PC-3 (cell line): ENCODE measurements at regions of chr1 and their contacts with region 1.

Region 1: GRCh38 chr1:85307987-85308832 is 31.8 kb upstream of the BCL10 start:
- DNase-seq: peak; percentile 93
- ATAC-seq: peak; percentile 98
- H3K4me3 ChIP-seq: peak overlapping the region; percentile 11; the same call in 1 of the 2 replicates
- H3K27ac ChIP-seq: peak overlapping the region; percentile 23
- H3K4me1 ChIP-seq: peaks cover 18% of the 10 kb centered on the region
- H3K27me3 ChIP-seq: no peaks in the 10 kb centered on the region
- CTCF ChIP-seq: peak; percentile 99

Region 2: DNA sequence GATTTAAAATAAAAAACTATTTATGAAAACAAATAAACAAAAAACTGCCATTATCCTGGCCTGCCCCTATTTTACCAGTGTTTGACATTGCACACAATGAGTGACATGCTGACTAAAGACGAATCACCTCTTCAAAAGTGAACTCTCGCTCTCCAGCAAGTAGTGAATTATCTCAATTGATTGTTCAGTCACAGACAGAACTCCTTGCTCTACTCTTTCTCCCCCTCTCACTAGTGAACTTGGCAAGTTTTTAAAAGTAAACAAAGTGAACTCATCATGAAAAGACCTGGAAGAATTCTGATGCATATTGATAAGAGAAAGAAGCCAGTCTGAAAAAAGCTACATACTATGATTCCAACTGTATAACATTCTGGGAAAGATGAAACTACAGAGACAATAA is 44.1 kb before region 1 on chr1:
- CTCF ChIA-PET with region 1: no interaction called
- POLR2A ChIA-PET with region 1: no interaction called
- intact Hi-C with region 1: no loop called
- DNase-seq: peak; percentile 71
- ATAC-seq: peak; percentile 19
- H3K4me3 ChIP-seq: no peak overlapping the region
- H3K27ac ChIP-seq: peak overlapping the region; percentile 43
- H3K4me1 ChIP-seq: peaks cover 16% of the 10 kb centered on the region
- H3K27me3 ChIP-seq: no peaks in the 10 kb centered on the region
- CTCF ChIP-seq: no peak

Region 3: DNA sequence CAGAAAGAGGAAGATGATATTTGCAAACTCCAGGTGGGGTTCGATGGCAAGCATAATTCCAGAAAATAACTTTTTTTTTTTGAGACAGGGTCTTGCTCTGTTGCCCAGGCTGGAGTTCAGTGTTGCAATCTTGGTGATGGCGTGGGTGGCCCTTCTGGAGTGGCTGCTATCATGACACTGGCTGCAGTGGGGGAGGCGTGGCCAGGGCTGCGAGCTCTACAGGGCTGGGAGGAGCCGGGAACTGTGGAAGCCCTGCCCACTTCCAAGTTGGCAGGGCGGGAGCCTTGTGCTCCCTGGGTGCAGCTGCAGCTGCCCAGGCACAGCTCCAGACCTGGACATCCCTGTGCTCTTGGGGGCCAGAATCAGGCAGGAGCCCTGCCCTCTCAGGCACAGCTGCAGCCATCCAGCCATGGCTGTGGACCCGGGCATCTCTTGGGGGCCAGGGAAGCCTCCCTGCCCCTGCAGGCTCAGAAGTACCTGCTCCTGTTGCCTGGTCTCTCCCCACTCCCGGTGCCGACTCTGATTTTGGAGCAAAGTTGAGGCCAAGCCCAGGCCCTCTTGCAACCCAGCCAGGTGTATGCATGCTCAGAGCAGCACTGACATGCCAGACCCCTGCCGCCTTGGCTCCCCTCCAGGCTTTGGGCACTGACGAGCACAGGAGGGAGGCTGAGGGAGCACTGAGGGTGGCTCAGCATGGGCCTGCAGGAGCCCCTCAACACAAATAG is 24.6 kb before region 1 on chr1:
- CTCF ChIA-PET with region 1: no interaction called
- POLR2A ChIA-PET with region 1: no interaction called
- intact Hi-C with region 1: no loop called
- DNase-seq: no peak
- ATAC-seq: no peak
- H3K4me3 ChIP-seq: no peak overlapping the region
- H3K27ac ChIP-seq: no peak overlapping the region
- H3K4me1 ChIP-seq: peaks cover 21% of the 10 kb centered on the region
- H3K27me3 ChIP-seq: no peaks in the 10 kb centered on the region
- CTCF ChIP-seq: no peak

Region 4: GRCh38 chr1:85330711-85331290 is 22.6 kb after region 1 on chr1:
- CTCF ChIA-PET with region 1: no interaction called
- POLR2A ChIA-PET with region 1: no interaction called
- intact Hi-C with region 1: no loop called
- DNase-seq: no peak
- ATAC-seq: no peak
- H3K4me3 ChIP-seq: no peak overlapping the region
- H3K27ac ChIP-seq: peak overlapping the region; percentile 90
- H3K4me1 ChIP-seq: peaks cover 53% of the 10 kb centered on the region
- H3K27me3 ChIP-seq: no peaks in the 10 kb centered on the region
- CTCF ChIP-seq: no peak

Region 5: DNA sequence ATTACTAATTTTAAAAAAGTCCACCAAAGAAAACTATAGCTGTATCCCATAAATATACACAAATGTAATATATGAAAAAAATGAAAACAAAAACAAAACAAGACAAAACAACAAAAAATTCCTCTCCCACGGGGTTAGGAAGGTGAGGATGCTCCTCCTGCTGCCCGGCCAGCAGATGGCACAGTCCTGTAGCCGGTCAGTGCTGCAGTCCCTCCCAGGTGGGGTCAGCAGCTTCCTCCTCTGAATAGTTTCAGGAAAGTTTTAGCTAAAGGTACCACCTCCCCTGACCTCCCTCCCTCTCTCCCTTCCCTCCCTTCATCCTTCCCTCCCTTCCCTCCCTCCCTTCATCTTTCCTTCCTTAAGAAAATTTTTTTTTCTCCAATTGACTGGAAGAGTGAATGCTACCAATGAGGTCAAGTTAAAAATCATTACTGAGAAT is 36.1 kb after region 1 on chr1:
- CTCF ChIA-PET with region 1: interaction called, 8 read pairs
- POLR2A ChIA-PET with region 1: no interaction called
- intact Hi-C with region 1: loop called (anchors 1 kb)
- DNase-seq: peak; percentile 63
- ATAC-seq: peak; percentile 78
- H3K4me3 ChIP-seq: no peak overlapping the region
- H3K27ac ChIP-seq: peak overlapping the region; percentile 71
- H3K4me1 ChIP-seq: peaks cover 57% of the 10 kb centered on the region
- H3K27me3 ChIP-seq: no peaks in the 10 kb centered on the region
- CTCF ChIP-seq: peak; percentile 85

Region 6: GRCh38 chr1:85398391-85399064 is 90.3 kb after region 1 on chr1:
- CTCF ChIA-PET with region 1: no interaction called
- POLR2A ChIA-PET with region 1: no interaction called
- intact Hi-C with region 1: loop called (anchors 1 kb)
- DNase-seq: peak; percentile 72
- ATAC-seq: peak; percentile 81
- H3K4me3 ChIP-seq: no peak overlapping the region
- H3K27ac ChIP-seq: no peak overlapping the region
- H3K4me1 ChIP-seq: peaks cover 18% of the 10 kb centered on the region; the same call in 1 of the 2 replicates
- H3K27me3 ChIP-seq: no peaks in the 10 kb centered on the region
- CTCF ChIP-seq: peak; percentile 77

Region 7: GRCh38 chr1:85450832-85451231 is 142.6 kb after region 1 on chr1:
- CTCF ChIA-PET with region 1: no interaction called
- POLR2A ChIA-PET with region 1: no interaction called
- intact Hi-C with region 1: no loop called
- DNase-seq: peak; percentile 71
- ATAC-seq: peak; percentile 54
- H3K4me3 ChIP-seq: no peak overlapping the region
- H3K27ac ChIP-seq: no peak overlapping the region
- H3K4me1 ChIP-seq: peaks cover 30% of the 10 kb centered on the region
- H3K27me3 ChIP-seq: no peaks in the 10 kb centered on the region
- CTCF ChIP-seq: no peak

Region 8: GRCh38 chr1:85464497-85465098 is 156.4 kb after region 1 on chr1:
- CTCF ChIA-PET with region 1: interaction called, 3 read pairs
- POLR2A ChIA-PET with region 1: no interaction called
- intact Hi-C with region 1: loop called (anchors 5 kb)
- DNase-seq: peak; percentile 73
- ATAC-seq: peak; percentile 69
- H3K4me3 ChIP-seq: peak overlapping the region; percentile 94
- H3K27ac ChIP-seq: no peak overlapping the region
- H3K4me1 ChIP-seq: peaks cover 48% of the 10 kb centered on the region
- H3K27me3 ChIP-seq: no peaks in the 10 kb centered on the region
- CTCF ChIP-seq: no peak

Region 9: GRCh38 chr1:85502625-85503083 is 194.4 kb after region 1 on chr1:
- CTCF ChIA-PET with region 1: no interaction called
- POLR2A ChIA-PET with region 1: no interaction called
- intact Hi-C with region 1: loop called (anchors 2 kb)
- DNase-seq: peak; percentile 79
- ATAC-seq: peak; percentile 87
- H3K4me3 ChIP-seq: no peak overlapping the region
- H3K27ac ChIP-seq: no peak overlapping the region
- H3K4me1 ChIP-seq: peaks cover 11% of the 10 kb centered on the region
- H3K27me3 ChIP-seq: no peaks in the 10 kb centered on the region
- CTCF ChIP-seq: peak; percentile 75

Region 10: DNA sequence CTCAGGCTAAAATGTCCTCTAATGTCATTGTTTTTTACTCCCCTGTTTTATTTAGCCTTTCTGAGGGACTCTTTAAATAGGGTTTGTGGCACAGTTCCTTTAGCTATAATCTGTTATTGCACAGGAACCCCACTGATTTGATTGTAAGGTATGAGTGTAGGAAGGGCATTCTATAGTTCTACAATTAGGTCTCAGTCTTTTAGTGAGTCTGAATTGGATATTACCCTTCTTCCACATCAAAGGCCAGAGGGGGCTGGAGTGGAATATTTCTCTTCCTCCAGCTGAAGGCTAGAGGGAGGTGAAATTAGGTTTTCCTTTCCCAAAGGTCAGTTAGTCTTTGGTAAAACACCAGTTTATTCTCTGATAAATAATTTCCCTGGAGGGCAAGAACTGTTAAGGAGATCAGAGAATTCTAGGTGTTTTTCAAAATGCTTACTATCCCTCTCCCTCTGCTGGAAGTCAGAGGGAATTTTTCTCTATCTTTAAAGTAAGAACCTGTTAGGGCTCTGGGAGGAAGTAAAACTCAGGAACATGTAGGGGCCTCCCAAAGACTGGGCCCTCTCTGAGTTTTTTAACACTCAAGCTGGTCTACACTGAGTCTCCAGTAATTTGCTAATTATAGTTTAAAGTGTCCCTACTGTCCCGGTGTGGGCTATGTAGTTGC is 576.3 kb after region 1 on chr1:
- CTCF ChIA-PET with region 1: no interaction called
- POLR2A ChIA-PET with region 1: no interaction called
- intact Hi-C with region 1: loop called (anchors 1 kb)
- DNase-seq: peak; percentile 61
- ATAC-seq: peak; percentile 84
- H3K4me3 ChIP-seq: no peak overlapping the region
- H3K27ac ChIP-seq: no peak overlapping the region
- H3K4me1 ChIP-seq: peaks cover 7% of the 10 kb centered on the region; the same call in 1 of the 2 replicates
- H3K27me3 ChIP-seq: no peaks in the 10 kb centered on the region
- CTCF ChIP-seq: peak; percentile 74